ENCODE measurements at regions of chr2 and their contacts with region 1.

Region 1: GRCh38 chr2:203446071-203446481 is 89.0 kb downstream of the RAPH1 start:
- DNase-seq: no peak
- H3K4me3 ChIP-seq: no peak overlapping the region
- H3K27ac ChIP-seq: peak overlapping the region in 1 of 3 donors; percentile 42
- H3K4me1 ChIP-seq: peaks cover 0 to 12% of the 10 kb centered on the region in 2 donors
- H3K27me3 ChIP-seq: no peaks in the 10 kb centered on the region
- CTCF ChIP-seq: no peak
- POLR2A ChIP-seq: no peak

Region 2: DNA sequence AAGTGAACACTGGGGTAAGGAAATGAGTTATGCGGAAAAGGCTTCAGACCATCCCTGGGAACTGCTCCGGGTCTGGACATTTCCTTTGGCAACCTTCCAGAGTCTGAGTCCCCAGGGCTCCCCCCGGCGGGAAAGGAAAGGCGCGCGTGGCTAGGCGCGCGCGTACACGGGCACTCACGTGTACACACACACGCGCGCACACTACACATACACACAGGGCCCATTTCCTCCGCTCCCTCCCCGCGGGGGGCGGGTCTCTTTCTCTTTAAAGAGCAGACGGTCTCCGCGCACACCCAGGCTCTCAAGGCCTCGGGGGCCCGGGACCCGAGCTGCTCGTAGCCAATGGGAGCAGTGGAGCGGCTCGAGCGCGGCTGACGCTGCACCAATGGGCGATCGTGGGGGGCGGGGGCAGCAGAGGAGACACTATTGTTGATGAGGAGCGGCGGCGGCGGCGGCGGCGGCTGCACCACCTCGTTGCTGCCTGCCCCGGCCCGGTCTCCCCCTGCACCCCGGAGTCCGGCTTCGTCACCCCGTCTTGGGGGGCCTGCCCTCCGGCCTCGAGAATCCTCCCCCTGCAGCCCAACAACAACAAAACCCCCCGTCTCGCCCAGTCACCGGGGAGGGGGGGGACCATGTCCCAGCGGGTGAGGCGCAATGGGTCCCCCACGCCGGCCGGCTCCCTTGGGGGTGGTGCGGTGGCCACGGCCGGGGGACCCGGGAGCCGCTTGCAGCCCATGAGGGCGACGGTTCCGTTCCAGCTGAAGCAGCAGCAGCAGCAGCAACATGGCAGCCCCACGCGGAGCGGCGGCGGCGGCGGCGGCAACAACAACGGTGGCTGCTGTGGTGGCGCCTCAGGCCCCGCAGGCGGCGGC is 811.3 kb before region 1 on chr2 and contains the start of gene FAM117B:
- intact Hi-C with region 1: no loop called
- DNase-seq: peak; percentile 99 to 100
- H3K4me3 ChIP-seq: peak within 1 kb of the TSS; percentile 71 to 94 (median 89)
- H3K27ac ChIP-seq: peak within 1 kb of the TSS; percentile 86 to 95 (median 94)
- H3K4me1 ChIP-seq: peaks cover 4 to 14% of the 10 kb centered on the region in 2 donors
- H3K27me3 ChIP-seq: no peaks in the 10 kb centered on the region
- CTCF ChIP-seq: no peak
- POLR2A ChIP-seq: peak; percentile 60 to 93
- total RNA-seq, gene FAM117B: 6.7 to 12.4 (median 7.7) TPM

Region 3: DNA sequence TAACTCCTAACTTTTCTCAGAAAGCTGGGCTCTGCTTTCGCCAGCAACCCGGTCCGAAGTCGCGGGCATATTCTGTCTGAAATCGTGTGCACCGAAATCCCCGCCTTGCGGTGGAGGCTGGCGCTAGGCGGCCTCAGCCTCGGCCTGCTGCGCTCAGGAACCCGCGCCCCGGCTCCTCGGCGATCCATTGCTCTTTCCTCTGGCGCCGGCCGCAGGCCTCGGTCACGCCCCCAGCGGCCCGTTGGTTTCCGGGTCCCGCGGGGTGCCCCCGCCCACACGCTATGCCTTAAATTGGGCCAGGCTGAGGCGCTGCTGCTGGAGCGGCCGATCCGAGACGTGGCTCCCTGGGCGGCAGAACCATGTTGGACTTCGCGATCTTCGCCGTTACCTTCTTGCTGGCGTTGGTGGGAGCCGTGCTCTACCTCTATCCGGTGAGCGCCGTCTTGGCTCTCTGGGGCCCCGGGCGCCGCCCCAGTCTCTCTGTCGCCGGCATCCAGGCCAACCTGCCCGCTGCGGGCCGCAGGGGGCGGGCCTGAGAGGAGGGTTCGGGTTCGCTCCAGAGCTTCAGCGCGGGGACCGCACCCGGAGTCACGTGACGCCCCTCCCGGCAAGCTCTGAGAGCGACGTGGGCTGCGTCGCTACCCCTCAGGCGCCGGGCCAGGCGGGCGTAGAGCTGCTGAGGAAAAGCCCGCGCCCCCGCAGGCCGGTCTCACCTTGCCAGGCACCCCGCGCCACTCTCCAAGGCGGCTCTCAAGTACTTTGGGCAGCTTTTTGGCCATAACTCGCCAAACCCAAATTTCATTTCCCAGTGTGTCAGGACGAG is 207.2 kb before region 1 on chr2 and contains the start of gene CYP20A1:
- intact Hi-C with region 1: loop called (anchors 10 kb)
- DNase-seq: peak; percentile 96 to 97
- H3K4me3 ChIP-seq: peak within 1 kb of the TSS; percentile 76 to 84 (median 79)
- H3K27ac ChIP-seq: peak within 1 kb of the TSS; percentile 90 to 98 (median 98)
- H3K4me1 ChIP-seq: peaks cover 0 to 16% of the 10 kb centered on the region in 2 donors
- H3K27me3 ChIP-seq: no peaks in the 10 kb centered on the region
- CTCF ChIP-seq: peak in 3 of 6 experiments; percentile 18 to 43 (median 38)
- POLR2A ChIP-seq: peak; percentile 57 to 87
- total RNA-seq, gene CYP20A1: 41.4 to 59.5 (median 48.2) TPM